ENCODE measurements at regions of chr2 and their contacts with region 1.

Region 1: GRCh38 chr2:237421542-237422116 is 7.7 kb upstream of the COL6A3 start:
- DNase-seq: peak; percentile 83
- ATAC-seq: peak; percentile 94
- H3K4me3 Mint-ChIP-seq: peak overlapping the region; percentile 38
- H3K27ac Mint-ChIP-seq: peak overlapping the region; percentile 48
- H3K4me1 Mint-ChIP-seq: peaks cover 13% of the 10 kb centered on the region
- H3K27me3 Mint-ChIP-seq: peaks cover 24% of the 10 kb centered on the region

Region 2: DNA sequence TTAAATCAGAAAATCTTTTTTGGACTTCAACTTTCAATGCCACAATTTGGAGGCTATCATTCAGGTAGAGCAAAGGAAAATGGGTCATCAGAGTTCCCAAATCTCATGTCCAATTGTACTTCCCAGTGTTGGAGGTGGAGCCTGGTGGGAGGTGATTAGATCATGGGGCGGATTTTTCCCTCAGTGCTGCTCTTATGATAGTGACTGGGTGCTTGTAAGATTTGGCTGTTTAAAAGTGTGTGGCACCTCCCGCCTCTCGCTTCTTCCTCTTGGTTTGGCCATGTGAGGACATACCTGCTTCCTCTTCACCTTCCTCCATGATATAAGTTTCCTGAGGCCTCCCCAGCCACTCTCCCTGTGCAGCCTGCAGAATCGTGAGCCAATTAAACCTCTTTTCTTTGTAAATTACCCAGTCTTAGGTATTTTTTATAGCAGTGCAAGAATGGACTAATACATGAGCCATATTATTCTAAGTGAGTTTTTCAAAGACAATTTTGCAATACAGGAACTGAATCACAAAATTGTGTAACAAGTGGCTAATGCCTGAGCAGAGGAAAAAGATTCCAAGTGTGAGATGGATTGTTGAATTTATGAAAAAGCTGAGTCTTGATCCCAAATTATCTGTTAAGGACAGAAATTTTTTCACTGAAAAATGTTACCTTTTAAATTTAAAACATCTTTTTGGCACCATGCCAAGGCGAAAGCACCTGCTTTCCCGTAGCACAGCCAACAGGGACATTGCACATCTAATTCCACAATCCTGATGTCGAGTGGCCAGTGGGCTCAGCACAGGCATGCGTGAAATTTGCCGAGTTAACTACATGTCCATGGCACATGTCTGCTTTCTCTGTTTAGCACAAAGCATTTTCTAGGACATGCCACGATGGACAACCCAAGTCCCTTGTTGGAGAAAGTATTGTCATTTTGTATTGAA is 158.5 kb before region 1 on chr2:
- CTCF ChIA-PET with region 1: no interaction called
- POLR2A ChIA-PET with region 1: no interaction called
- DNase-seq: no peak
- ATAC-seq: no peak
- H3K4me3 Mint-ChIP-seq: no peak overlapping the region
- H3K27ac Mint-ChIP-seq: no peak overlapping the region
- H3K4me1 Mint-ChIP-seq: no peaks in the 10 kb centered on the region
- H3K27me3 Mint-ChIP-seq: peaks cover 7% of the 10 kb centered on the region

Region 3: GRCh38 chr2:237365671-237366070 is 56.0 kb before region 1 on chr2:
- CTCF ChIA-PET with region 1: no interaction called
- POLR2A ChIA-PET with region 1: no interaction called
- DNase-seq: no peak
- ATAC-seq: no peak
- H3K4me3 Mint-ChIP-seq: no peak overlapping the region
- H3K27ac Mint-ChIP-seq: no peak overlapping the region
- H3K4me1 Mint-ChIP-seq: no peaks in the 10 kb centered on the region
- H3K27me3 Mint-ChIP-seq: no peaks in the 10 kb centered on the region

Region 4: GRCh38 chr2:237441605-237442274 is 20.1 kb after region 1 on chr2:
- CTCF ChIA-PET with region 1: interaction called, 32 read pairs
- POLR2A ChIA-PET with region 1: interaction called, 5 read pairs
- DNase-seq: no peak
- ATAC-seq: peak; percentile 33
- H3K4me3 Mint-ChIP-seq: no peak overlapping the region
- H3K27ac Mint-ChIP-seq: no peak overlapping the region
- H3K4me1 Mint-ChIP-seq: peaks cover 28% of the 10 kb centered on the region
- H3K27me3 Mint-ChIP-seq: peaks cover 2% of the 10 kb centered on the region

Region 5: GRCh38 chr2:237459226-237459625 is 37.6 kb after region 1 on chr2:
- CTCF ChIA-PET with region 1: interaction called, 14 read pairs
- POLR2A ChIA-PET with region 1: no interaction called
- DNase-seq: no peak
- ATAC-seq: no peak
- H3K4me3 Mint-ChIP-seq: no peak overlapping the region
- H3K27ac Mint-ChIP-seq: no peak overlapping the region
- H3K4me1 Mint-ChIP-seq: peaks cover 20% of the 10 kb centered on the region
- H3K27me3 Mint-ChIP-seq: peaks cover 4% of the 10 kb centered on the region

Region 6: GRCh38 chr2:237483040-237483721 is 61.6 kb after region 1 on chr2:
- CTCF ChIA-PET with region 1: interaction called, 121 read pairs
- POLR2A ChIA-PET with region 1: no interaction called
- DNase-seq: no peak
- ATAC-seq: no peak
- H3K4me3 Mint-ChIP-seq: no peak overlapping the region
- H3K27ac Mint-ChIP-seq: no peak overlapping the region
- H3K4me1 Mint-ChIP-seq: no peaks in the 10 kb centered on the region
- H3K27me3 Mint-ChIP-seq: peaks cover 43% of the 10 kb centered on the region

Measured in activated CD8-positive, alpha-beta T cell treated with anti-CD3 and anti-CD28 coated beads, Interleukin-2, amount 10 ng/mL, durations not matched to agents 7 days and 5 days (primary cell).